HEK293T (cell line): ENCODE measurements at regions of chr6 and their contacts with region 1.

Region 1: GRCh38 chr6:31827286-31828079 is at the start of gene HSPA1B:
- DNase-seq: peak; percentile 89

Region 2: DNA sequence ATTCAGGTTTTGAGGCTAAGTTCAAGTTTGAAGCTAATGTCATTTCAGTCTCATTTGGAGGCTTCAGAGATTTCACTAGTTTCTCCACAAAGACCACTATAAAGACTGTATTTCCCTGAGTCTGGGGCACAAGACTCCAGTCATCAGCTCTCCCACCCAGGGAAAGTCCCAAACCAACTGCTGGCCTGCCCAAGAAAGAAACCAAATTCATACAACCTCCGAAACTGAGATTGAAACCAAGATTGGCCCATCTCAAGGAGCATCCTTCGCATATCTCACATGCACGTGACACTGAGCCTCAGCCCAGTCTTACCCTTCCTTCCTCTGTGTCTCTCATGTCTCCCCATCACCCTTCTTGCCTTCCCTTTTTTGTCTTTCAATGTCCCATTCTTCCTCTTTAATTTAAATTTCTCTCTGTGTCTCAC is 258.9 kb before region 1 on chr6:
- CTCF ChIA-PET with region 1: no interaction called
- POLR2A ChIA-PET with region 1: no interaction called
- DNase-seq: no peak

Region 3: DNA sequence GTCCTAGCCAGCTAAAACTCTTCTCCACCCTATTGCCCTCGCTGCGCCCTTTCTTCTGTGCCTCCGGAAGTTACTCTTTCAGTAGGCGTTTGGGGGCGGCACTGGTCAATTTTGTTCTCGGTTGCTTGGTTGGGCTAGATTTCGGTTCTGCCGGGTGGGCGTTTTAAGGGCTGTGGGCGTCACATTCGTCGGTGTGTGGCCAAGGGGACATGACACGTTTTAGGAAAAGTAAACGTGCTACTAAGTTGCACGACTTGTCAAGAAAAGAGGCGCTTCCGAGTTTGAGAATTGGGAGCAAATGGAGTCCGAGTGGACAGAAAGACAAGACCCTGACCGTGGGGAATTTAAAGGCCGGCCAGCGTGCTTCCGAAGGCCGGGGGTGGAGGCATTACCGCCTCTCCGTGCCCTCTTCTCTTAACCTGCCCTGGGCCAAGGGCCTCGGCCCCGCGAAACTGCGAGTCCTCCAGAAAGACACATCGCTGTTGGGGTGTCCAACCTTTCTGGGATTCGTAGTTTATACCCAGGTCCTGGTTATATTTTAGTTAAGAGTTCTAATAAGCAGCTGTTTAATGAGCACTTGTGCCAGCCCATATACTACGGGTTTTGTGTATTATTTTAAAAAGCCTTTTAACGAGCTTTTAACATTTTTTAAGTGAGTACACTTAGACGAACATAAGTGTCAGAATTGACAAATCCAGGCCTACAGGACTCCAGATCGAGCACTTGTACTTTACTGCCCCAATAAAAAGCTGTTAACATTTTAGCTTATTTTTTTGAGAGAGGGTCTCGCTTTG is 174.4 kb before region 1 on chr6:
- CTCF ChIA-PET with region 1: no interaction called
- POLR2A ChIA-PET with region 1: interaction called, 10 read pairs
- DNase-seq: peak; percentile 88

Region 4: GRCh38 chr6:31776989-31777666 is 50.4 kb before region 1 on chr6 and contains the start of gene VWA7:
- CTCF ChIA-PET with region 1: no interaction called
- POLR2A ChIA-PET with region 1: interaction called, 17 read pairs
- DNase-seq: peak; percentile 65

Region 5: GRCh38 chr6:31806465-31807272 is 20.8 kb before region 1 on chr6 and contains the start of gene LSM2:
- CTCF ChIA-PET with region 1: interaction called, 6 read pairs
- POLR2A ChIA-PET with region 1: interaction called, 104 read pairs
- DNase-seq: peak; percentile 100

Region 6: DNA sequence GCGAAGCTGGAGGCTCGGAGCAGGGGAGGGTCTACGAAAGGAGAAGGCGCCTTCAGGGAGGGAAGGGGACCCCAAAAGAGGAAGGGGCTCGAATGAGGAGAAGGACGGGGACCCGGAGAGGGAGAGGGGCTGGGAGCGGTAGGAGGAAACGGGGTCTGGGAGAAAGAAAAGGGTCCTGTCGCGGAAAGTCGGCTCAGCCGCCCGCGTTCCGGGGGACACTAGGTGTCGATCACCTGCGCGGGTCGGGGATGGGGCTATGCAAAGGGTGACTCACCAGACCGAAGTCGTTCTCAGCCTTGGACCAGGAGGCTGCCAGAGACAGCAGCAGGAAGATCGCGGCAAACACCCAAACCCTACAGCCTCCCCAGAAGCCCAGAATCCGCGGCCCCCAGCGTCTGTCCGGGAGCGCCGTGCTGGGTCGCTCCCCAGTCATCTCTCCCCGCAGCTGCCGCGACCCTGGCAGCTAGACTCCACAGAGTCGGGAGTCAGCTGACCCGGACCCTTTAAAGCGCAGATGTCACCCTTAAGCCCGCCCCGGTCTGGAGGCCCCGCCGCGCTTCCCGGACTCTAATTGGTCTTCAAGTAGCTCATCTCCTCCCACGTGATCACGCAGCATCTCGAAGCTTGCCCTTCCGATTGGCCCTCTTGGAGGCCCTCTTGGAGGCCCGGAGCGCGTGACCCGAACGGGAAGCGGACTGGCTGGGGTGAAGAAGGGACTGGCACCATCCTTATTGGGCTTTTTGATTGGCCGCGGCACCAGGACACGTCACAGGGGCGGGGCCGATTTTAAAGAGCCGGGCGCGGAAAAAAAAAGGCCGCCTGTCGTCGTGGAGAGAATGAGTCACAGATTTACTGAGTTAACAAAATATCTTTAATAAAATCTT is 35.1 kb after region 1 on chr6 and contains the start of gene NEU1:
- CTCF ChIA-PET with region 1: interaction called, 6 read pairs
- POLR2A ChIA-PET with region 1: interaction called, 21 read pairs
- DNase-seq: peak; percentile 98

Region 7: DNA sequence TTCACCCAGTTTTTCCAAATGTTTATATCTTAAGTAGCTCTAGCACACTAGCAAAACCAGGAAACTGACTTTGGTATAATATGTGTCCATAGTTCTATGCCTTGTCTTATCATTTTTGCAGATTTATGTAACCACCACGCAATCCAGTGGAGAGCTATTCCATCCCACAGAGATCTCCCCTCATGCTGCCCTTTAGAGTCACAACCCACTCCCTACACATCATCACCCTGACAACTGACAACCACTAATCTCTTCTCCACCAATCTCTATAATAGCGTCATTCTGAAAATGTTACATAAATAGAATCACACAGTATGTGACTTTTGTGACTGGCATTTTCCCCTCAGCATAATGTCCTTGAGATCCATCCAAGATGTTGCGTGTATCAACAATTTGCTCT is 673.5 kb after region 1 on chr6:
- CTCF ChIA-PET with region 1: no interaction called
- POLR2A ChIA-PET with region 1: no interaction called
- DNase-seq: no peak